Activated CD8-positive, alpha-beta T cell treated with anti-CD3 and anti-CD28 coated beads, Interleukin-2, amount 10 ng/mL, durations not matched to agents 7 days and 5 days (primary cell): ENCODE measurements at regions of chr9 and their contacts with region 1.

Region 1: GRCh38 chr9:121545875-121546423 is 46.3 kb upstream of the GGTA1 start:
- DNase-seq: peak; percentile 81
- ATAC-seq: peak; percentile 94
- H3K4me3 Mint-ChIP-seq: no peak overlapping the region
- H3K27ac Mint-ChIP-seq: no peak overlapping the region
- H3K4me1 Mint-ChIP-seq: no peaks in the 10 kb centered on the region
- H3K27me3 Mint-ChIP-seq: peaks cover 19% of the 10 kb centered on the region

Region 2: GRCh38 chr9:121557581-121558447 is 11.9 kb after region 1 on chr9:
- CTCF ChIA-PET with region 1: interaction called, 21 read pairs
- POLR2A ChIA-PET with region 1: no interaction called
- DNase-seq: peak; percentile 67
- ATAC-seq: peak; percentile 55
- H3K4me3 Mint-ChIP-seq: peak overlapping the region; percentile 24
- H3K27ac Mint-ChIP-seq: peak overlapping the region; percentile 41
- H3K4me1 Mint-ChIP-seq: peaks cover 34% of the 10 kb centered on the region
- H3K27me3 Mint-ChIP-seq: peaks cover 4% of the 10 kb centered on the region

Region 3: DNA sequence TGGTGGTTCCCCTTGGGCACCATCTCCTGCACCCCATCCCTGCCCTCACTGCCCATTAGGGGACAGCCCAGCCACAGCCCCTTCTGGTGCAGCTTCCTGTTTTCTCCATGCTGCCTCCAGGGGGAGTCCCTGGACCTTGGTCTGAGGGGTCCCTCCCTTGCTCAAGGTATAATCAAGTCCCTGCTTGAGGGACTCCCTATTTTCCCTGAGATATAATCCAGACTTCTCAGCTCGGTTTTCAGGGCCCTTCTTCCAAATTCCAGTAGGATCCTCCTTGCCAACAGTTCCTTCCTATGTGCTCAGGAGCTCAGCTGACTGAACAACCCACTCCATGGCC is 75.1 kb after region 1 on chr9:
- CTCF ChIA-PET with region 1: no interaction called
- POLR2A ChIA-PET with region 1: no interaction called
- DNase-seq: peak; percentile 27
- ATAC-seq: no peak
- H3K4me3 Mint-ChIP-seq: no peak overlapping the region
- H3K27ac Mint-ChIP-seq: no peak overlapping the region
- H3K4me1 Mint-ChIP-seq: peaks cover 6% of the 10 kb centered on the region
- H3K27me3 Mint-ChIP-seq: peaks cover 3% of the 10 kb centered on the region